SK-N-SH (cell line): ENCODE measurements at regions of chr6 and their contacts with region 1.

Region 1: DNA sequence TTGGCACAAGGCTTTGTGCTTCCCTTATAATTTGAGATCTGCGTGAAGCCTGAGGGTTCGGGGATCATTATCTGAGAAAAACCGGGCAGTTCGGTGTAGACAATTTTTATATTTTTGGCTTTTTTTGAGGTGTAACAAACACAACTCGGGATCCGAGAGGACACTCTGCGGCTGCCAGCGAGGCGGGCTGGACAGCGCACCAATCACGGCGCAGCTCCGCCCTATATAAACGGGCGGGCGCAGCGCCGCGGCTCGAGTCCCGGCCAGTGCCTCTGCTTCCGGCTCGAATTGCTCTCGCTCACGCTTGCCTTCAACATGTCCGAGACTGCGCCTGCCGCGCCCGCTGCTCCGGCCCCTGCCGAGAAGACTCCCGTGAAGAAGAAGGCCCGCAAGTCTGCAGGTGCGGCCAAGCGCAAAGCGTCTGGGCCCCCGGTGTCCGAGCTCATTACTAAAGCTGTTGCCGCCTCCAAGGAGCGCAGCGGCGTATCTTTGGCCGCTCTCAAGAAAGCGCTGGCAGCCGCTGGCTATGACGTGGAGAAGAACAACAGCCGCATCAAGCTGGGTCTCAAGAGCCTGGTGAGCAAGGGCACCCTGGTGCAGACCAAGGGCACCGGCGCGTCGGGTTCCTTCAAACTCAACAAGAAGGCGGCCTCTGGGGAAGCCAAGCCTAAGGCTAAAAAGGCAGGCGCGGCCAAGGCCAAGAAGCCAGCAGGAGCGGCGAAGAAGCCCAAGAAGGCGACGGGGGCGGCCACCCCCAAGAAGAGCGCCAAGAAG is 69.0 kb downstream of the HFE start:
- DNase-seq: peak; percentile 88
- H3K4me3 ChIP-seq: peak overlapping the region; percentile 82 to 90
- H3K27ac ChIP-seq: peak overlapping the region; percentile 88 to 97
- H3K4me1 ChIP-seq: no peaks in the 10 kb centered on the region; a peak in 3 of 4 replicates
- H3K27me3 ChIP-seq: no peaks in the 10 kb centered on the region
- CTCF ChIP-seq: no peak
- EP300 ChIP-seq: peak in 1 of 2 experiments; percentile 60; a peak in 1 of 4 replicates
- RAD21 ChIP-seq: no peak

Region 2: GRCh38 chr6:26025894-26026832 is 130.1 kb before region 1 on chr6:
- CTCF ChIA-PET with region 1: no interaction called
- POLR2A ChIA-PET with region 1: interaction called, 25 read pairs
- DNase-seq: peak; percentile 59
- H3K4me3 ChIP-seq: peak overlapping the region; percentile 70 to 89
- H3K27ac ChIP-seq: peak overlapping the region; percentile 92 to 99
- H3K4me1 ChIP-seq: peaks cover 15 to 34% of the 10 kb centered on the region in 2 experiments; a peak in 3 of 4 replicates
- H3K27me3 ChIP-seq: no peaks in the 10 kb centered on the region
- CTCF ChIP-seq: peak; percentile 91
- EP300 ChIP-seq: peak in 1 of 2 experiments; percentile 22; a peak in 1 of 4 replicates
- RAD21 ChIP-seq: peak; percentile 24; the same call in 1 of the 2 replicates

Region 3: DNA sequence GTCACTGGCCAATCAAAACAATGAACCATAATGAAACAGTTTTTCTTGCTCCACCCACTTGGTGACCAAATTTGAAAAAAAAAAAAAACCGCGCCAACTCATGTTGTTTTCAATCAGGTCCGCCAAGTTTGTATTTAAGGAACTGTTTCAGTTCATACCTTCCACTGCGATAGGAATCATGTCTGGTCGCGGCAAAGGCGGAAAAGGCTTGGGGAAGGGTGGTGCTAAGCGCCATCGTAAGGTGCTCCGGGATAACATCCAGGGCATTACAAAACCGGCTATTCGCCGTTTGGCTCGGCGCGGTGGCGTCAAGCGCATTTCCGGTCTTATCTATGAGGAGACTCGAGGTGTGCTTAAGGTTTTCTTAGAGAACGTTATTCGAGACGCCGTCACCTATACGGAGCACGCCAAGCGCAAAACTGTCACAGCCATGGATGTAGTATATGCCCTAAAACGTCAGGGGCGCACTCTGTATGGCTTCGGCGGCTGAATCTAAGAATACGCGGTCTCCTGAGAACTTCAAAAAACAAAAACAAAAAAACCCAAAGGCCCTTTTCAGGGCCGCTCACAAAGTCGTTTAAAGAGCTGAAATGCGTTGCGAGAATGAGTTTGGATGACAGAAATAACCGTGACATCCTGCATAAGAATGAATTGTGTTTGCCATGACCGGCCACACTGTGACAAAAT is 52.4 kb before region 1 on chr6:
- CTCF ChIA-PET with region 1: no interaction called
- POLR2A ChIA-PET with region 1: interaction called, 16 read pairs
- DNase-seq: peak; percentile 69
- H3K4me3 ChIP-seq: peak overlapping the region; percentile 55 to 65
- H3K27ac ChIP-seq: peak overlapping the region; percentile 85 to 97
- H3K4me1 ChIP-seq: peaks cover 7 to 17% of the 10 kb centered on the region in 2 experiments
- H3K27me3 ChIP-seq: no peaks in the 10 kb centered on the region
- CTCF ChIP-seq: peak; percentile 62
- EP300 ChIP-seq: peak; percentile 91 to 97
- RAD21 ChIP-seq: no peak

Region 4: DNA sequence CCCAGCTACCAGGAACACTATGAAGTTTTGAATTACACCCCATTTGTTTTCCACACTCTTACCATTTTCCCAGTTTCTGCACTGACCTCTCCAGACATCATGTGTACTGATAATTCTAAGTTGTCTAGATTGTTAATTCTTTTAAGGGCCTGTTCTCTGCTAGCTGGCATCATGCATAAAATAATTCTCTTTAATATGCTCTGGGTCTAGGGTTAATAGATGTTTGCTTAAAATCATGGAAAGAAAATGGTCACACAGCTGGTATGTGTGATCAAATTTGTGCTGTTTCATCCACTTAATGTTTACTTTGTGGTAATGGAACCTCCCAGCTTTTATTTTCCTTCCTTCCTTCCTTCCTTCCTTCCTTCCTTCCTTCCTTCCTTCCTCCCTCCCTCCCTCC is 19.9 kb before region 1 on chr6:
- CTCF ChIA-PET with region 1: interaction called, 8 read pairs
- POLR2A ChIA-PET with region 1: interaction called, 22 read pairs
- DNase-seq: no peak
- H3K4me3 ChIP-seq: no peak overlapping the region
- H3K27ac ChIP-seq: no peak overlapping the region
- H3K4me1 ChIP-seq: peaks cover 0 to 5% of the 10 kb centered on the region in 2 experiments; a peak in 2 of 4 replicates
- H3K27me3 ChIP-seq: no peaks in the 10 kb centered on the region
- CTCF ChIP-seq: no peak
- EP300 ChIP-seq: no peak
- RAD21 ChIP-seq: no peak

Region 5: DNA sequence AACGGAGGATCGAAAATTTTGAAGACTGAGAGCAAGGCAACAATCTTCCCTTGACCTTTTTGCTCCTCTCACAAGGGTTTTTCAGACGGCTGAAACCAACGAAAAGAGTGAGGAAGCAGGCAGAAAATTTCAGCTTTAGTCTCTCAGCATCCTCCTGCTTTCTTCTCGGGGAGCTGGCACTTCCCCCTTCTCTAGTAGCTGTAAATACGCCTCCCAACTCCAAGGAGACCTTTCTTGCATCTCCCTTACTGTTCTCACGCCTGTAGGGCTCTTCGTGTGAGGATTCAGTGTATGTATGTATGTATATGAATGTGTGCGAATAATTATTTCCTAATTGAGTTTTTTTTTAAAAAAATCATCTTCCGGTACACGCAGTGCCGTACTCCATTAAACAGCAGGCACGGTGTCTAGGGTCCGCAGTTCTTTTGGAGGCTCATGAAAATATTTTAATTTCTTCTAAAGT is 16.3 kb after region 1 on chr6:
- CTCF ChIA-PET with region 1: interaction called, 18 read pairs
- POLR2A ChIA-PET with region 1: interaction called, 70 read pairs
- DNase-seq: peak; percentile 39
- H3K4me3 ChIP-seq: peak overlapping the region; percentile 60 to 86
- H3K27ac ChIP-seq: peak overlapping the region; percentile 96 to 97
- H3K4me1 ChIP-seq: peaks cover 3 to 12% of the 10 kb centered on the region in 2 experiments; a peak in 3 of 4 replicates
- H3K27me3 ChIP-seq: no peaks in the 10 kb centered on the region
- CTCF ChIP-seq: no peak
- EP300 ChIP-seq: no peak
- RAD21 ChIP-seq: no peak

Region 6: DNA sequence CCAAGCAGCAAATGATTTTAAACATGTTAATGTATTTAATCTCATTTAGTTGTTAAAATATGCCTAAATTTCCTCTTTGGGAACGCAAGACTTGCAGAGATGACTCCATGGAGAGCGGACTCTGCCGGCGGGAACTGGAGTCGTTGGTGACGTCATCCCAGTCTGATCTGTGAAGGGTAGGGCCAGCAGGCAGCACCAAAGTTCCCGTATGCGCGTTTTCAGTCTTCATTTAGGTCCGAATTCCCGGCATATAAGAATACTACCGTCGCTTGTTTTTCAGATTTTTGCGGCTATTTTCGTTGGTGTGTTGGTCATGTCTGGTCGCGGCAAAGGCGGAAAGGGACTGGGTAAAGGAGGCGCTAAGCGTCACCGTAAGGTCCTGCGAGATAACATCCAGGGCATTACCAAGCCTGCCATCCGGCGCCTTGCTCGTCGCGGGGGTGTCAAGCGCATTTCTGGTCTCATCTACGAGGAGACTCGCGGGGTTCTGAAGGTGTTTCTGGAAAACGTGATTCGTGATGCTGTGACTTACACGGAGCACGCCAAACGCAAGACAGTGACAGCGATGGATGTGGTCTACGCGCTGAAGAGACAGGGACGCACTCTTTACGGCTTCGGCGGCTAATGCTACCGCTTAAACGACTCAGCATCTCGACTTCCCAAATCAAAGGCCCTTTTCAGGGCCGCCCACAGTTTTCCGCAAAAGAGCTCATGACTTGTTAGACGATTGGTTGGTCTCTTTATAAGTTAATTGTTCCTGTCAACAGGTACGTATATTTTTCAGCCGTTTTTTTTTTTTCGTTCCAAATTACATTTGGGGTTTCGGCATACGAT is 48.3 kb after region 1 on chr6:
- CTCF ChIA-PET with region 1: no interaction called
- POLR2A ChIA-PET with region 1: interaction called, 108 read pairs
- DNase-seq: peak; percentile 83
- H3K4me3 ChIP-seq: peak overlapping the region; percentile 69 to 95
- H3K27ac ChIP-seq: peak overlapping the region; percentile 97 to 99
- H3K4me1 ChIP-seq: peaks cover 4 to 13% of the 10 kb centered on the region in 2 experiments; a peak in 3 of 4 replicates
- H3K27me3 ChIP-seq: no peaks in the 10 kb centered on the region
- CTCF ChIP-seq: peak; percentile 49
- EP300 ChIP-seq: peak; percentile 88 to 97
- RAD21 ChIP-seq: no peak